Keratinocyte (primary cell): ENCODE measurements at regions of chr2 and their contacts with region 1.

Region 1: GRCh38 chr2:158914731-158915130 is 53.7 kb upstream of the TANC1 start:
- DNase-seq: no peak
- H3K4me3 ChIP-seq: no peak overlapping the region
- H3K27ac ChIP-seq: no peak overlapping the region
- H3K4me1 ChIP-seq: peaks cover 5% of the 10 kb centered on the region
- H3K27me3 ChIP-seq: no peaks in the 10 kb centered on the region
- CTCF ChIP-seq: no peak

Region 2: DNA sequence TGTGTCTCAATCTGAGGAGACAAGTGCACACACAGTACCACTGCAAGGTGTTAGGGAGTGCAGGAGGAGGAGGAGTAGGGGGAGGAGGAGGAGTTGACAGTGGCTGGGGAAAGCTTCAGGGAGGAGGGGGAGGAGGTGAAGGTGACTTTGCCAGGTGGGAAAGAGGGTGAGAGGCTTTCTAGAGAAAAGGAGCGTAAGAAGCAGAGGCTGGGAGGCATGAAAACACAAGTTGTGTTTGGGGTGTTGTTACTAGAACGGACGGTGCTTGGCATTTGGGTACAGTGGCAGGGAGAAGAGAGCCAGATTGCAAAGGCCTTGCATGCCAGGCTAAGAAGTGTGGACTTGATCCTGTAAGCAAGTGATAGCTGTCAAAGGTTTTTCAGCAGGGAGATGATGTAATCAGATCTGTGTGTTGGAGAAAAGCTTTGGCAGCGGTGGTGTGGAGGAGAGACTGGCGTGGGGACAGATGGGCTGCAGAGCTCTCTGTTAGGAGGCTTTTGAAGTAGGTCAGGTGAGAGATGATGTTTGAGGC is 69.9 kb after region 1 on chr2:
- dilution Hi-C with region 1: loop called (anchors 10 kb)
- DNase-seq: no peak
- H3K4me3 ChIP-seq: no peak overlapping the region
- H3K27ac ChIP-seq: no peak overlapping the region
- H3K4me1 ChIP-seq: peaks cover 23% of the 10 kb centered on the region
- H3K27me3 ChIP-seq: no peaks in the 10 kb centered on the region
- CTCF ChIP-seq: no peak